Activated CD4-positive, alpha-beta T cell treated with anti-CD3 and anti-CD28 coated beads, Interleukin-2, amount 10 ng/mL, durations not matched to agents 7 days and 5 days (primary cell): ENCODE measurements at regions of chr3 and their contacts with region 1.

Region 1: GRCh38 chr3:18625085-18625484 is 199.9 kb upstream of the SATB1 start:
- DNase-seq: no peak
- H3K4me3 Mint-ChIP-seq: no peak overlapping the region
- H3K27ac Mint-ChIP-seq: no peak overlapping the region
- H3K4me1 Mint-ChIP-seq: peaks cover 8% of the 10 kb centered on the region
- H3K27me3 Mint-ChIP-seq: no peaks in the 10 kb centered on the region

Region 2: GRCh38 chr3:18494251-18494650 is 130.8 kb before region 1 on chr3:
- CTCF ChIA-PET with region 1: no interaction called
- POLR2A ChIA-PET with region 1: no interaction called
- DNase-seq: no peak
- H3K4me3 Mint-ChIP-seq: no peak overlapping the region
- H3K27ac Mint-ChIP-seq: no peak overlapping the region
- H3K4me1 Mint-ChIP-seq: peaks cover 37% of the 10 kb centered on the region
- H3K27me3 Mint-ChIP-seq: no peaks in the 10 kb centered on the region

Region 3: DNA sequence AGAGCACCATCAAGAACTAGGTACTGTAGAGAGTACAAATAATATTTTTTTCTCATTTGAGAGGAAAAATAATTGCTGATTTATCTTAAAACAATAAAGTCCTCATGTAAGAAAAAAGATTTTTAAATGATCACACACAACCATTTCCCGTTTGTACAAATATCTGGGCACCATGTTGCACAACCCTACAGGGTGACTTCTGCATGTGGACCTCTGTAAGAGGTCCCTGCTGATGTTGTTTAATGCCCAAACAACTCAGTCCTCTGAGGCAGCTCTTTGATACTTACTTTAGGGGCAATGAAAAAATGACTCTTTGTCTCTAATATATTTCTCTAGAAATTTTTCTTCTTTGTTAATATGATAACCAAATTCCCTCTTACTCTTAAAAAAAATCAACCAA is 31.9 kb before region 1 on chr3:
- CTCF ChIA-PET with region 1: no interaction called
- POLR2A ChIA-PET with region 1: no interaction called
- DNase-seq: no peak
- H3K4me3 Mint-ChIP-seq: no peak overlapping the region
- H3K27ac Mint-ChIP-seq: no peak overlapping the region
- H3K4me1 Mint-ChIP-seq: no peaks in the 10 kb centered on the region
- H3K27me3 Mint-ChIP-seq: no peaks in the 10 kb centered on the region

Region 4: GRCh38 chr3:18643281-18643680 is 18.2 kb after region 1 on chr3:
- CTCF ChIA-PET with region 1: interaction called, 10 read pairs
- POLR2A ChIA-PET with region 1: no interaction called
- DNase-seq: no peak
- H3K4me3 Mint-ChIP-seq: no peak overlapping the region
- H3K27ac Mint-ChIP-seq: peak overlapping the region; percentile 42
- H3K4me1 Mint-ChIP-seq: peaks cover 60% of the 10 kb centered on the region
- H3K27me3 Mint-ChIP-seq: no peaks in the 10 kb centered on the region